ENCODE measurements at regions of chr22 and their contacts with region 1.

Region 1: DNA sequence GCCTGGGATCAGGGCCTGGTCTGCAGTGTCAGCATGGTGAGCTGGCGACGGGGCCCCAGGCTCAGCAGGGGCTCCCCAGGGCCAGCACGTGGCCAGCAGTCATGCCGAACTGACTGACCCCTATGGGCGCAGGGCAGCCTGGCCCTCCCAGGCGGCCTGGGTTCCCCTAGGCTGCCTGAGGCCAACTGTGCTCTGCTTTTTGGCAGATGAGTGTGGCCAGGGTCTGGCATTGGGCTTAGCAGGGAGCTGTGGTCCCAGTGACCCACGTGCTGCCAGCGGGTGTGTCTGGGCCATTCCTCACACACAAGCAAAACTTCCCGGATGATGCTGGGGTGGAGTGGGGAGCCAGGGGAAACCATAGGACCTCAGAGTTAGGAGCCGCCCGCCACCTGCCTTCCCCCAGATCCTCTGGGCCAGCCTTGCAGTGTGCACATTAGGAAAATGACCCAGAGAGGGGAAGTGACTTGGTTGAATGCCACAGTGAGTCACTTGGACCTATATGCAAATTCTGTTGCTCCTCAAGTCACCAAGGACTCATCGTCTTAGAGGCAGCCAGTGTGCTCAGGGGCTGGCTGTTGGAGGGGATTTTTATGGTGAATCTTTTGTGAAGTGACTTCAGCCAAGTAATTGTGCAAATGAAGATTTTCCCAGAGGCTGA is 6.5 kb downstream of the ADORA2A start:
- DNase-seq: no peak
- ATAC-seq: peak; percentile 3 to 59 (median 16)
- H3K4me3 ChIP-seq: no peak overlapping the region
- H3K27ac ChIP-seq: peak overlapping the region in 9 of 10 donors; percentile 36 to 91 (median 72)
- H3K4me1 ChIP-seq: peaks cover 41 to 98% (median 76%) of the 10 kb centered on the region in 9 donors
- H3K27me3 ChIP-seq: no peaks in the 10 kb centered on the region
- CTCF ChIP-seq: no peak

Region 2: GRCh38 chr22:24466716-24467328 is 32.9 kb after region 1 on chr22:
- intact Hi-C with region 1: loop called in 5 of 10 experiments (anchors 5 kb)
- DNase-seq: peak in 1 of 2 donors; percentile 48
- ATAC-seq: peak; percentile 50 to 75 (median 64)
- H3K4me3 ChIP-seq: peak overlapping the region in 1 of 10 donors; percentile 7
- H3K27ac ChIP-seq: peak overlapping the region in 8 of 10 donors; percentile 2 to 65 (median 60)
- H3K4me1 ChIP-seq: peaks cover 7 to 71% (median 44%) of the 10 kb centered on the region in 9 donors
- H3K27me3 ChIP-seq: no peaks in the 10 kb centered on the region
- CTCF ChIP-seq: no peak

Region 3: GRCh38 chr22:24474221-24474620 is 40.3 kb after region 1 on chr22:
- intact Hi-C with region 1: loop called in 5 of 10 experiments (anchors 5 kb)
- DNase-seq: no peak
- ATAC-seq: peak in 3 of 8 donors; percentile 41 to 62 (median 58)
- H3K4me3 ChIP-seq: no peak overlapping the region
- H3K27ac ChIP-seq: peak overlapping the region in 5 of 10 donors; percentile 13 to 39 (median 31)
- H3K4me1 ChIP-seq: peaks cover 0 to 52% (median 29%) of the 10 kb centered on the region in 9 donors
- H3K27me3 ChIP-seq: no peaks in the 10 kb centered on the region
- CTCF ChIP-seq: no peak

Region 4: GRCh38 chr22:24482575-24482974 is 48.6 kb after region 1 on chr22:
- intact Hi-C with region 1: loop called in 3 of 10 experiments (anchors 5 to 10 kb)
- DNase-seq: no peak
- ATAC-seq: peak in 1 of 8 donors; percentile 56
- H3K4me3 ChIP-seq: no peak overlapping the region
- H3K27ac ChIP-seq: peak overlapping the region in 1 of 10 donors; percentile 64
- H3K4me1 ChIP-seq: peaks cover 0 to 53% (median 13%) of the 10 kb centered on the region in 9 donors
- H3K27me3 ChIP-seq: no peaks in the 10 kb centered on the region
- CTCF ChIP-seq: no peak

Region 5: DNA sequence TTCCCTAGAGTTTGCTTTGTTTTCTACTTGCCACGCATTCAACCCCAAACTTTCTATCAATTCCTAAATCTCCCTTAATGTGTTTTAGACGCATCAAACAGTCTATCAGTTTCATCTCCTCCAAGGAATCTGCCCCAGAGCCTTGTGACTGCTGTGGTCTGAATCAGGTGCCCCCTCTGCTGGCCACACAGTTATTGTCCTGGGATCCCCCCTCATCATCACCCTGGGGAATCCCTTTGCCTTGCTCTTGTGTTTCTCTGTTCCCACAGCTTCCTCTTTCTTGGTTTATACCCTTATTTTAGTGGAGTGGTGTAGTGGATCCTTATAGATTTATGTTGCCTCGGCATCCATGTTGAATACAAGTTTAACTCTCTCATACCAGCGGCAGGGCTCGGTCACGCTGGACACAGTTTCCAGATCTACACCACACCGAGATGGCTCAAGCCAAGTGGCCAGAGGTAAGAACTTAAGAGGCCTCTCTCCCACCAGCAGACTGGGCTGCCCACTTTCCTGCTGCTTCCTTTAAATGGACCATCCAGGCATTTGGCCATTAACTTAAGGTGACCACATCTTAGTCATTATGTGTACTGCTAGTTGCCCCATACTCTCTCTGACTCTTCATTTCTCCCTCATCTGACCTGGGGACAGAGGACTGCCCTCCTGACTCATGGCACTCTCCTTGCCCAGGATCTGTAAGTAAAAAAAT is 69.3 kb after region 1 on chr22:
- intact Hi-C with region 1: loop called in 1 of 10 experiments (anchors 10 kb)
- DNase-seq: peak; percentile 65 to 68
- ATAC-seq: peak; percentile 63 to 86 (median 74)
- H3K4me3 ChIP-seq: no peak overlapping the region
- H3K27ac ChIP-seq: peak overlapping the region in 1 of 10 donors; percentile 48
- H3K4me1 ChIP-seq: peaks cover 0 to 47% (median 13%) of the 10 kb centered on the region in 9 donors
- H3K27me3 ChIP-seq: no peaks in the 10 kb centered on the region
- CTCF ChIP-seq: peak; percentile 38 to 78 (median 69)

Measured in heart right ventricle (tissue), 16 donors.